Activated naive CD4-positive, alpha-beta T cell treated with anti-CD3 and anti-CD28 coated beads, Interleukin-2, amount 10 ng/mL, durations not matched to agents 7 days and 5 days (primary cell): ENCODE measurements at regions of chr12 and their contacts with region 1.

Region 1: DNA sequence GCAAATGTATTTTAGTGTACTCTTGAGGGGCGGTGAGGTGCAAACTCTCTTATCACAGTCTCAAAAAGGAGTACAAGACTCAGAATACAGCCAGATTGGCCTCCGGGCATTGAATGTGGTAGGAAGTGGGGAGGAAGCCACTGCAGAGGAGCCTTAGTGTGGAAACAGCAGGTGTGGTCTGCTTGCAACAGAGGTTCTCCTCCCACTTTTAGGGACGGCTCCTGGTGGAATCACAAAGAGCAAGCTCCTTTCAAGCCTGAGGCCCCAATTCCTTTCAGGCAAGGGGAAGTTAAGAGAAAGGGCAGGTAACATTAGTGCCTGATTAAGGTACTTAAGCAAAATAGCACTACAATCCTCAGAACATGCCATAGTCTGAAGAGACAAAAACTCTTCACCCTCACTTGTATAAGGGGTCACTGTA is 23.7 kb upstream of the SLC2A3 start:
- DNase-seq: peak; percentile 72
- H3K4me3 Mint-ChIP-seq: peak overlapping the region; percentile 78
- H3K27ac Mint-ChIP-seq: peak overlapping the region; percentile 89
- H3K4me1 Mint-ChIP-seq: peaks cover 49% of the 10 kb centered on the region
- H3K27me3 Mint-ChIP-seq: no peaks in the 10 kb centered on the region

Region 2: DNA sequence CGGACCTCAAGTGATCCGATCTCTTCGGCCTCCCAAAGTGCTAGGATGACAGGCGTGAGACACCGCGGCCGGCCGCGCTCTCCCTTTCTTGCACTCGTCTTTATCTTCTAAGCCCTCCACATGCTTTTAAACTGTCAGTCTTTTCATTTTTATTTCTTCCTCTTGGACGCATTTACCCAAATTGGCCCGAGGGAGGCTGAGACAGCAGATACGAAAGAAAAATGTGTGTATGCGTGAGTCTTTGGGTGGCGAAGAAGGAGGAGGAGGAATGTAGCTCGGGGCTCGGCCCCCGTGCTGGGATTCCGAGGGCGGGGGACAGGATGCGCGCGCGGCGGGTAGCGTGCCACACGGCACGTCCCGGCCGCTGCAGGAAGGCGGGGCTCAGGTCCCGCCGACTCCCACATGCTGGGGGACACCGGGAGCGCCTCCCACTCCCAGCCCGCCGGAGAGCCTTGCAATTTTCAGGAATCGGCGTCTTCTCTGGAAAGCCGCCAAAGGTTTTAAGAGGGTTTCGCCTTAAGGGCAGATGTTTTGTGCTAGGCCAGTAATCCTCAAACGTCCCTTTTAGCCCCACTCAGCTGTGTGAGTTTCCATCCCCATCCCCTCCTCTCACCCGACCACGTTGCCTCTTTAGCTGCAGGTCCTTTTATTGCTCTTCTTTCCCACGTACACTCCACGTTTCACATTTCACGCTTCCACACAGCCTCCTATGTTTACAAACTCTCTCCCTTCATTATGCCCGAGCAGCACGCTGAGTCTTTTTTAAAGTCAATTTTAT is 11.0 kb after region 1 on chr12:
- CTCF ChIA-PET with region 1: interaction called, 19 read pairs
- DNase-seq: peak; percentile 91
- H3K4me3 Mint-ChIP-seq: peak overlapping the region; percentile 75
- H3K27ac Mint-ChIP-seq: peak overlapping the region; percentile 96
- H3K4me1 Mint-ChIP-seq: peaks cover 49% of the 10 kb centered on the region
- H3K27me3 Mint-ChIP-seq: no peaks in the 10 kb centered on the region